Calu3 (cell line): ENCODE measurements at regions of chr7 and their contacts with region 1.

Region 1: GRCh38 chr7:78607099-78607498 is 808.5 kb downstream of the PHTF2 start:
- DNase-seq: peak; percentile 2
- H3K4me3 Mint-ChIP-seq: no peak overlapping the region
- H3K27ac Mint-ChIP-seq: no peak overlapping the region
- H3K4me1 Mint-ChIP-seq: no peaks in the 10 kb centered on the region
- H3K27me3 Mint-ChIP-seq: no peaks in the 10 kb centered on the region
- CTCF ChIP-seq: no peak

Region 2: GRCh38 chr7:78779788-78780187 is 172.7 kb after region 1 on chr7:
- CTCF ChIA-PET with region 1: no interaction called
- intact Hi-C with region 1: loop called (anchors 2 kb)
- DNase-seq: no peak
- H3K4me3 Mint-ChIP-seq: no peak overlapping the region
- H3K27ac Mint-ChIP-seq: no peak overlapping the region
- H3K4me1 Mint-ChIP-seq: no peaks in the 10 kb centered on the region
- H3K27me3 Mint-ChIP-seq: no peaks in the 10 kb centered on the region
- CTCF ChIP-seq: no peak